ENCODE measurements at regions of chr22 and their contacts with region 1.

Region 1: GRCh38 chr22:29031227-29032011 is 30.2 kb downstream of the C22orf31 start:
- DNase-seq: no peak

Region 2: GRCh38 chr22:28882878-28883656 is 148.4 kb before region 1 on chr22 and contains the start of gene ZNRF3:
- intact Hi-C with region 1: loop called (anchors 10 kb)
- DNase-seq: peak; percentile 97
- total RNA-seq, gene ZNRF3: 4.8 TPM

Region 3: GRCh38 chr22:29072193-29072978 is 41.0 kb after region 1 on chr22:
- intact Hi-C with region 1: no loop called
- DNase-seq: peak; percentile 95

Region 4: DNA sequence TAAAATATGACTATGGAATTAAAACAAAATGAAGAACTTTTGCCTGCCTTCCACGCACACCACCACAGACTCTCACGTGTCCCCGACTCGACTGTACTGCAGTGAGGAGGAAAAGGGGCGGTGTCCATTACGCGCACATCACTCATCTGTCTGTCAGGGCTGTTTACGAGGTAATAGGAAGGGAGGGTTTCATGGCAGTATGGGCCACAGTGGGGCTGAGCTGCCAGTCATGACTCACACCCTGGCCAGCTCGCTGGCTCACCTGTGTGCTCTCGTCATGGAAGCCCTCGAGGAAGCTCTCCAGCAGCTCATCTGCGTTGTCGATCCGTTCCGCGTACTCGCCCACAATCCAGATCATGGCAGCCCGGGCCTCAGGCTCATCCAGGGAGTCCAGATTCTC is 317.5 kb after region 1 on chr22:
- intact Hi-C with region 1: no loop called
- DNase-seq: no peak